H1 (cell line): ENCODE measurements at regions of chr6 and their contacts with region 1.

Region 1: GRCh38 chr6:56292505-56293181 is 45.3 kb upstream of the COL21A1 start:
- DNase-seq: peak in 1 of 2 experiments; percentile 50
- H3K4me3 ChIP-seq: no peak overlapping the region
- H3K27ac ChIP-seq: no peak overlapping the region
- H3K4me1 ChIP-seq: peaks cover 0 to 3% (median 2%) of the 10 kb centered on the region in 4 experiments; a peak in 3 of 7 replicates
- H3K27me3 ChIP-seq: no peaks in the 10 kb centered on the region
- CTCF ChIP-seq: peak in 2 of 3 experiments; percentile 67 to 75; a peak in 3 of 4 replicates
- EP300 ChIP-seq: no peak
- POLR2A ChIP-seq: no peak
- RAD21 ChIP-seq: peak; percentile 94 to 95

Region 2: GRCh38 chr6:55276745-55277530 is 1015.7 kb before region 1 on chr6:
- CTCF ChIA-PET with region 1: interaction called, 15 read pairs
- POLR2A ChIA-PET with region 1: no interaction called
- DNase-seq: peak in 1 of 2 experiments; percentile 50
- H3K4me3 ChIP-seq: no peak overlapping the region
- H3K27ac ChIP-seq: no peak overlapping the region
- H3K4me1 ChIP-seq: peaks cover 0 to 7% (median 2%) of the 10 kb centered on the region in 4 experiments; a peak in 4 of 7 replicates
- H3K27me3 ChIP-seq: no peaks in the 10 kb centered on the region
- CTCF ChIP-seq: peak in 2 of 3 experiments; percentile 49 to 67; a peak in 3 of 4 replicates
- EP300 ChIP-seq: no peak
- POLR2A ChIP-seq: no peak
- RAD21 ChIP-seq: peak; percentile 80 to 85

Region 3: DNA sequence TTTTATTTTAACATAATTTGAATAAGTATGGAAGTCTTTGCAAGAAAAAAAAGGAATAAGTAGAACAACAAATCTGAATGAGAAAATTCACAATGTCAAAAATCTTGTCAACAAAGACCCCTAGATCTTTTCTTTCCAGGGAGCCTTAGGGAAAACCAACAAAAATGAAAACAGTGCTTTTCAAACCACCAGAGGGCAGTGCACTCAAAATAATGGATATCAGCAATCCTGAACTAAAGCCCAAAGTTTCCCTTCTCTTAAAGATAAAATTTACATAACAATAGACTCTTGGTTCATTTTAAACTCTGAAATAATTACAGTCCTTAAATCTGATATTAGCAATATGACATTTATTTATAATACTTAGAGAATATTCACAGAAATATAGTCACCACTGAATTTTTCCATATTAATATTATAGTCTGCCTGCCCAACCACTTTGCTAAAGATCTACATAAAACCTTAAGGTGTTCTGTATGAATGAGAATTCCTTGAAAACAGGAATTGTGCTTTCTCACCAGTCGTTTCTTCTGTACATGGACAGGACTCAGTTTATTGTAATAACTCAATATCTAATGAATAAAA is 311.9 kb before region 1 on chr6:
- CTCF ChIA-PET with region 1: interaction called, 30 read pairs
- POLR2A ChIA-PET with region 1: interaction called, 3 read pairs
- DNase-seq: peak in 1 of 2 experiments; percentile 54
- H3K4me3 ChIP-seq: no peak overlapping the region
- H3K27ac ChIP-seq: no peak overlapping the region
- H3K4me1 ChIP-seq: no peaks in the 10 kb centered on the region
- H3K27me3 ChIP-seq: no peaks in the 10 kb centered on the region
- CTCF ChIP-seq: peak in 2 of 3 experiments; percentile 51 to 59; a peak in 2 of 4 replicates
- EP300 ChIP-seq: no peak
- POLR2A ChIP-seq: no peak
- RAD21 ChIP-seq: peak; percentile 87 to 89

Region 4: DNA sequence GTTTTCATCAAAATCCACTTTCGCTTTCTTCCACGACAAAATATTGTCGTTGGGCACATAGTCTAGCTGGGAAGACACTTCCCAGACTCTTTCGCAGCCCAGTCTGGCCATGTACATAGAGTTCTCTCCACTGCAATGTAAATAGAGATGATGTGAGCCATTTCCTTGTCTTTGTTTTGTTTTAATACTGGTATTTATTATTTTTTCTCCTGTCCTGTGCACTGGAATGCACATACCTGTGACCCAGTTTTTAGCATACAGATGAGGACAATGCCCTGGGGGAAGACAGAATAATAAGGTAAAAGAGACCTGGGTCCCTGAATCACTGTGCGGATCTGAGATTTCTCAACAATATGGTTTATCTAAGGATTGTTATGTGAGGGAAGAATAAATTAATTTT is 267.7 kb before region 1 on chr6:
- CTCF ChIA-PET with region 1: interaction called, 19 read pairs
- POLR2A ChIA-PET with region 1: no interaction called
- DNase-seq: no peak
- H3K4me3 ChIP-seq: no peak overlapping the region
- H3K27ac ChIP-seq: no peak overlapping the region
- H3K4me1 ChIP-seq: no peaks in the 10 kb centered on the region
- H3K27me3 ChIP-seq: no peaks in the 10 kb centered on the region
- CTCF ChIP-seq: no peak
- EP300 ChIP-seq: no peak
- POLR2A ChIP-seq: no peak
- RAD21 ChIP-seq: no peak